Activated T-helper 2 cell treated with anti-CD3 and anti-CD28 coated beads, Interferon-gamma antibody, Interleukin-2, Interleukin-4, amounts not matched to agents 10 μg/mL and 5 μg/mL and 100 μg/mL, durations not matched to agents 14 hours and 24 hours and 36 hours (primary cell): ENCODE measurements at regions of chr12 and their contacts with region 1.

Region 1: GRCh38 chr12:15700595-15700994 is 88.6 kb downstream of the EPS8 start:
- DNase-seq: no peak
- H3K4me3 Mint-ChIP-seq: peak overlapping the region; percentile 59
- H3K27ac Mint-ChIP-seq: peak overlapping the region; percentile 84
- H3K4me1 Mint-ChIP-seq: peaks cover 40% of the 10 kb centered on the region
- H3K27me3 Mint-ChIP-seq: no peaks in the 10 kb centered on the region

Region 2: GRCh38 chr12:15443611-15444010 is 257.0 kb before region 1 on chr12:
- intact Hi-C with region 1: loop called (anchors 2 kb)
- DNase-seq: no peak
- H3K4me3 Mint-ChIP-seq: no peak overlapping the region
- H3K27ac Mint-ChIP-seq: no peak overlapping the region
- H3K4me1 Mint-ChIP-seq: peaks cover 5% of the 10 kb centered on the region
- H3K27me3 Mint-ChIP-seq: peaks cover 18% of the 10 kb centered on the region

Region 3: DNA sequence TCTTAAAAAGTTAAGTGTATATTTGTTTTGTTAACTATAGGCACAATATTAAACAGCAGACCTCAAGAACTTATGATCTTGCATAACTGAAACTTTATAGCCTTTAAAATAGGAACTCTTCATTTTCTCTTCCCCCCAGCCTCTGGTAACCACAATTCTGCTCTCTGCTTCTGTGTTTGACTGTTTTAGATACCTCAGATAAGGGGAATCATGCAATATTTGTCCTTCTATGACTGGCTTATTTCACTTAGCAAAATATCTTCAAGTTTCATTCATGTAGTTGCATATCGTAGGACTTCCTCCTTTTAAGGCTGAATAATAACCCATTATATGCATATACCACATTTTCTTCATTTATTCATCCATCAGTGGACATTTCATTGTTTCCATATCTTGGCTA is 247.0 kb before region 1 on chr12:
- intact Hi-C with region 1: loop called (anchors 2 kb)
- DNase-seq: no peak
- H3K4me3 Mint-ChIP-seq: no peak overlapping the region
- H3K27ac Mint-ChIP-seq: no peak overlapping the region
- H3K4me1 Mint-ChIP-seq: peaks cover 31% of the 10 kb centered on the region
- H3K27me3 Mint-ChIP-seq: peaks cover 30% of the 10 kb centered on the region

Region 4: DNA sequence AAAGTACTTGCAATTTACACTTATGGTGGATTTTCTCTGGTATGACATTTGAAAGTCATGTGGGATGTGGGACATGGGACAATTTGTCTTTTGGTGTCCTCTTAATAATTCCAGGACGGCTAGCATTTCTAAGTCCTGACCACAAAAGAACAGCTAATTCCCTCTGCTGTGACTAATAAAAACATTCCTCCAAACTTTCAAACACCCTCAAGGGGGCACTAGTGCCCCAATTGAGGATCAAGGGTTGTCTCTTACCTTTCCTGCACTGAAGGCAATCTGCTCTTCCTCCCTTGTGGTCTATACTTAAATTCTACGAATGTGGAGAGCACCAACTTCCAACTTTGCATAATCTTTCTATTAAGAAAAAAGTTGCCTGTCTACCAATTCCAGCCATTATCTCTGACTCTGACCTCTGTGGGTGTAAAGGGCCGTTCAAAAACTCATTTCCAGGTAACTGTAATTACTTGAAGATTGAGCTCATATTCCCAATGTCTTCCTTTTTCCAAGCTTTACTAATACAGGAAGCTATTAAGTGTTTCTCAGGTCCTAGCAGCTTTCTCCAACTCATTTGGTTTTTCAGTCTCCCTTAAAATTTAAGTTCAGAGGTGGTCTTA is 168.1 kb before region 1 on chr12:
- intact Hi-C with region 1: loop called (anchors 5 kb)
- DNase-seq: peak; percentile 37
- H3K4me3 Mint-ChIP-seq: no peak overlapping the region
- H3K27ac Mint-ChIP-seq: no peak overlapping the region
- H3K4me1 Mint-ChIP-seq: peaks cover 12% of the 10 kb centered on the region
- H3K27me3 Mint-ChIP-seq: peaks cover 23% of the 10 kb centered on the region

Region 5: GRCh38 chr12:15563663-15564062 is 136.9 kb before region 1 on chr12:
- intact Hi-C with region 1: loop called (anchors 2 kb)
- DNase-seq: no peak
- H3K4me3 Mint-ChIP-seq: peak overlapping the region; percentile 83
- H3K27ac Mint-ChIP-seq: peak overlapping the region; percentile 91
- H3K4me1 Mint-ChIP-seq: peaks cover 65% of the 10 kb centered on the region
- H3K27me3 Mint-ChIP-seq: no peaks in the 10 kb centered on the region

Region 6: GRCh38 chr12:15575671-15576541 is 124.7 kb before region 1 on chr12:
- intact Hi-C with region 1: loop called (anchors 2 kb)
- DNase-seq: no peak
- H3K4me3 Mint-ChIP-seq: no peak overlapping the region
- H3K27ac Mint-ChIP-seq: peak overlapping the region; percentile 46
- H3K4me1 Mint-ChIP-seq: peaks cover 48% of the 10 kb centered on the region
- H3K27me3 Mint-ChIP-seq: no peaks in the 10 kb centered on the region

Region 7: GRCh38 chr12:15789220-15790171 is 88.9 kb after region 1 on chr12 and contains the start of gene EPS8:
- intact Hi-C with region 1: loop called (anchors 5 kb)
- DNase-seq: peak; percentile 84
- H3K4me3 Mint-ChIP-seq: peak within 1 kb of the TSS; percentile 76
- H3K27ac Mint-ChIP-seq: peak within 1 kb of the TSS; percentile 24
- H3K4me1 Mint-ChIP-seq: peaks cover 16% of the 10 kb centered on the region
- H3K27me3 Mint-ChIP-seq: peaks cover 63% of the 10 kb centered on the region
- total RNA-seq, gene EPS8: 2.7 and 2.8 TPM in 2 replicates